Activated naive CD4-positive, alpha-beta T cell treated with anti-CD3 and anti-CD28 coated beads for 36 hours (primary cell): ENCODE measurements at regions of chr9 and their contacts with region 1.

Region 1: GRCh38 chr9:128818099-128818838 is at the start of gene ENDOG:
- DNase-seq: peak; percentile 98
- H3K4me3 Mint-ChIP-seq: peak within 1 kb of the TSS; percentile 82
- H3K27ac Mint-ChIP-seq: peak within 1 kb of the TSS; percentile 24
- H3K4me1 Mint-ChIP-seq: peaks cover 22% of the 10 kb centered on the region
- H3K27me3 Mint-ChIP-seq: no peaks in the 10 kb centered on the region
- total RNA-seq, gene ENDOG: 9.9 to 10.3 TPM

Region 2: GRCh38 chr9:128370826-128371621 is 447.2 kb before region 1 on chr9 and contains the start of gene URM1:
- CTCF ChIA-PET with region 1: no interaction called
- intact Hi-C with region 1: loop called (anchors 1 kb)
- DNase-seq: peak; percentile 97
- H3K4me3 Mint-ChIP-seq: peak within 1 kb of the TSS; percentile 92
- H3K27ac Mint-ChIP-seq: peak within 1 kb of the TSS; percentile 92
- H3K4me1 Mint-ChIP-seq: peaks cover 28% of the 10 kb centered on the region
- H3K27me3 Mint-ChIP-seq: no peaks in the 10 kb centered on the region
- total RNA-seq, gene URM1: 44.4 to 45.2 TPM

Region 3: GRCh38 chr9:128702445-128702948 is 115.8 kb before region 1 on chr9 and contains the start of gene PKN3:
- CTCF ChIA-PET with region 1: interaction called, 4 read pairs
- intact Hi-C with region 1: loop called (anchors 2 kb)
- DNase-seq: peak; percentile 91
- H3K4me3 Mint-ChIP-seq: peak within 1 kb of the TSS; percentile 84
- H3K27ac Mint-ChIP-seq: peak within 1 kb of the TSS; percentile 19
- H3K4me1 Mint-ChIP-seq: peaks cover 13% of the 10 kb centered on the region
- H3K27me3 Mint-ChIP-seq: no peaks in the 10 kb centered on the region
- total RNA-seq, gene PKN3: 6.3 to 7.3 TPM

Region 4: GRCh38 chr9:128829477-128830251 is 11.4 kb after region 1 on chr9 and contains the start of gene SPOUT1:
- CTCF ChIA-PET with region 1: interaction called, 21 read pairs
- intact Hi-C with region 1: loop called (anchors 1 kb)
- DNase-seq: peak; percentile 95
- H3K4me3 Mint-ChIP-seq: peak within 1 kb of the TSS; percentile 92
- H3K27ac Mint-ChIP-seq: peak within 1 kb of the TSS; percentile 86
- H3K4me1 Mint-ChIP-seq: peaks cover 18% of the 10 kb centered on the region
- H3K27me3 Mint-ChIP-seq: no peaks in the 10 kb centered on the region
- total RNA-seq, gene SPOUT1: 72.9 to 82.3 TPM

Region 5: GRCh38 chr9:129110740-129111527 is 292.7 kb after region 1 on chr9 and contains the starts of genes CRAT and PTPA:
- CTCF ChIA-PET with region 1: no interaction called
- intact Hi-C with region 1: loop called (anchors 5 kb)
- DNase-seq: peak; percentile 99
- H3K4me3 Mint-ChIP-seq: peak within 1 kb of the TSS; percentile 87
- H3K27ac Mint-ChIP-seq: peak within 1 kb of the TSS; percentile 93
- H3K4me1 Mint-ChIP-seq: peaks cover 38% of the 10 kb centered on the region
- H3K27me3 Mint-ChIP-seq: no peaks in the 10 kb centered on the region
- total RNA-seq, gene CRAT: 15.0 to 15.8 TPM
- total RNA-seq, gene PTPA: 83.0 to 94.5 TPM